HepG2 (cell line): ENCODE measurements at regions of chr21 and their contacts with region 1.

Region 1: GRCh38 chr21:45309069-45309986 is 21.6 kb upstream of the POFUT2 start:
- DNase-seq: peak; percentile 69
- ATAC-seq: peak; percentile 76
- H3K4me3 ChIP-seq: peak overlapping the region; percentile 60 to 78 (median 61)
- H3K27ac ChIP-seq: peak overlapping the region; percentile 91
- H3K4me1 ChIP-seq: peaks cover 39% of the 10 kb centered on the region
- H3K27me3 ChIP-seq: no peaks in the 10 kb centered on the region
- CTCF ChIP-seq: peak; percentile 75
- EP300 ChIP-seq: no peak
- POLR2A ChIP-seq: no peak
- RAD21 ChIP-seq: peak; percentile 76

Region 2: GRCh38 chr21:45297869-45298268 is 11.5 kb before region 1 on chr21:
- CTCF ChIA-PET with region 1: interaction called, 20 read pairs
- POLR2A ChIA-PET with region 1: interaction called, 21 read pairs
- in situ Hi-C with region 1: no loop called
- intact Hi-C with region 1: loop called (anchors 1 kb)
- DNase-seq: no peak
- ATAC-seq: no peak
- H3K4me3 ChIP-seq: no peak overlapping the region
- H3K27ac ChIP-seq: no peak overlapping the region
- H3K4me1 ChIP-seq: peaks cover 61% of the 10 kb centered on the region
- H3K27me3 ChIP-seq: no peaks in the 10 kb centered on the region; a peak in 1 of 5 replicates
- CTCF ChIP-seq: no peak
- EP300 ChIP-seq: 0 out of 4 replicates have a peak, but pooled peaks of 1 of the 2 experiments have one; percentile 13
- POLR2A ChIP-seq: no peak
- RAD21 ChIP-seq: no peak

Region 3: GRCh38 chr21:45330075-45330781 is 20.9 kb after region 1 on chr21:
- CTCF ChIA-PET with region 1: no interaction called
- POLR2A ChIA-PET with region 1: interaction called, 26 read pairs
- in situ Hi-C with region 1: no loop called
- intact Hi-C with region 1: no loop called
- DNase-seq: peak; percentile 89
- ATAC-seq: peak; percentile 85
- H3K4me3 ChIP-seq: peak overlapping the region; percentile 25 to 72 (median 56); a peak in 5 of 6 replicates
- H3K27ac ChIP-seq: peak overlapping the region; percentile 72
- H3K4me1 ChIP-seq: peaks cover 79% of the 10 kb centered on the region
- H3K27me3 ChIP-seq: no peaks in the 10 kb centered on the region
- CTCF ChIP-seq: no peak
- EP300 ChIP-seq: peak in 1 of 2 experiments; percentile 70; a peak in 2 of 4 replicates
- POLR2A ChIP-seq: no peak; a peak in 1 of 4 replicates
- RAD21 ChIP-seq: peak; percentile 29; the same call in 1 of the 2 replicates

Region 4: DNA sequence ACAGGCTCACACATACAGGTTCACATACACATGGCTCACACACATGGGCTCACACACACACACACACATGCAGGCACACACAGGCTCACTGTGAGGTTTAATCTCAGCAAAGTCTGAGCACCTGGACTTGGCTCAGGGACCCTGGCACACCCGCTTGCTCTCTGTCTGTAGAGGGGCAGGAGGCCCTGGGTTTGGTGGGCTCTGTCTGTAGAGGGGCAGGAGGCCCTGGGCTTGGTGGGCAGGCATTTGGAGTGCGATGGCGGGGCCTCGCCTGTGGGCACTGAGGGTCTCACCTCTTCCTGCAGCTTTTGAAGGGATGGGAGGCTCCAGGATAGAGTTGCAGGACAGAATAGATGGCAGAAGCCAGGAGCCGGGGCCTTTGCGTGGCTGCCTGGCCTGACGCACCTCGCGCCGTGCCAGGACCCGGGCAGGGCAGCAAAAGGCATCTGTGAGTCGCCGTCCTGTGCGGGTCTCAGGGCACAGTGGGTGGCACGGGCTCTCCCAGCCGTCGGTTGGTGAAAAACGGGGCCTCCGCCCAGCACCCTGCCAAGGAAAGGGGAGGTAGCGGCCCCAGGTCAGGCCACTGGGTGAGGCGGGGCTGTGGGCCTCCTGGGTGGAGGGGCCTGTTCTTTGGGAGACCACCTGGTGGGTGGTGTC is 112.9 kb after region 1 on chr21:
- CTCF ChIA-PET with region 1: no interaction called
- POLR2A ChIA-PET with region 1: interaction called, 11 read pairs
- in situ Hi-C with region 1: no loop called
- intact Hi-C with region 1: loop called (anchors 1 kb)
- DNase-seq: no peak
- ATAC-seq: no peak
- H3K4me3 ChIP-seq: no peak overlapping the region
- H3K27ac ChIP-seq: no peak overlapping the region
- H3K4me1 ChIP-seq: peaks cover 77% of the 10 kb centered on the region
- H3K27me3 ChIP-seq: no peaks in the 10 kb centered on the region
- CTCF ChIP-seq: no peak
- EP300 ChIP-seq: no peak
- POLR2A ChIP-seq: no peak
- RAD21 ChIP-seq: no peak

Region 5: DNA sequence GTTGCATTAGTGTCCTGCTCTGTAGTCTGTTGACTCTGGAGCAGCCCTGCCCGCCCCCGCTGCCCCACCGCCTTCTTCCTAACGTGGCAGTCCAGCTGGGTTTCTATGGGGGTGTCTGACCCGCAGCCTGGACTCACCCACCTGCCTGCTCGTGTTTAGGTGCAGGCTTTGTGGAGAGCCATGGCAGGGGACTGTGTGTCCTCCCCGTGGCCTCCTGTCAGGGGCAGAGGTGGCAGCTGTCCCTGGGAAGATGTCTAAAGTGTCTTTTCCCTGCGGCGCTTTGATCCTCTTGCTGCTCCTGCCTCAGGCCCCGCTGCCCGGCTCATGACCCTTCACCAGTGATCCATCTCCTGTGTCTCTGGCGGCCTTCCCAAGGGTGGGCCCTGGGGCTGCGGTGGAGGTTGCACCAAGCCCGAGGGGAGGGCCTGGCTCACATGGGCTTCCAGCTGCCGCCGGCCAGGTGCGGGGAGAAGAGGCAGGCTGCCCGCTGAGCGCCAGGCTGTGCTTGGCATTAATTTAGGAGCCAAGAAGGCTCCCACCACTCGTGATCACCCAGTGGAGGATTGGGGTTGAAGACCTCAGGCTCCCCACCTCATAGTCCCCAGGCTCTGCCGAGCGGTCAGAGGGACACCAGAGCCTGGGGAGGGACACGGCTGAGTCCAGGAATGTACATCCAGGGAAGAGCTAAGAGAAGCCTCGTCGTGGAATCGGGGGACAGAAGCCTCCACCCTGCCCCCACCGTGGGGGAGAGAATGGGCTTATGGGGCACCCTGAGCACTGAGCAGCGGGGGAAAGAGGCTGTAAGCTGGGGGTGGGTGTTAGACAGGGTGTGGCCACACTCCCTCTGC is 139.7 kb after region 1 on chr21:
- CTCF ChIA-PET with region 1: no interaction called
- POLR2A ChIA-PET with region 1: interaction called, 4 read pairs
- in situ Hi-C with region 1: no loop called
- intact Hi-C with region 1: loop called (anchors 5 kb)
- DNase-seq: peak; percentile 94
- ATAC-seq: peak; percentile 84
- H3K4me3 ChIP-seq: peak overlapping the region in 2 of 3 experiments; percentile 21 to 49; a peak in 3 of 6 replicates
- H3K27ac ChIP-seq: peak overlapping the region; percentile 74
- H3K4me1 ChIP-seq: peaks cover 83% of the 10 kb centered on the region
- H3K27me3 ChIP-seq: no peaks in the 10 kb centered on the region
- CTCF ChIP-seq: no peak; the same call in 1 of the 2 replicates
- EP300 ChIP-seq: 0 out of 4 replicates have a peak, but pooled peaks of 1 of the 2 experiments have one; percentile 39
- POLR2A ChIP-seq: no peak
- RAD21 ChIP-seq: peak; percentile 22; the same call in 1 of the 2 replicates

Region 6: GRCh38 chr21:45578176-45578801 is 269.0 kb after region 1 on chr21:
- CTCF ChIA-PET with region 1: no interaction called
- POLR2A ChIA-PET with region 1: no interaction called
- in situ Hi-C with region 1: no loop called
- intact Hi-C with region 1: no loop called
- DNase-seq: peak; percentile 30
- ATAC-seq: peak; percentile 33
- H3K4me3 ChIP-seq: no peak overlapping the region
- H3K27ac ChIP-seq: no peak overlapping the region
- H3K4me1 ChIP-seq: no peaks in the 10 kb centered on the region
- H3K27me3 ChIP-seq: peaks cover 13 to 45% of the 10 kb centered on the region in 2 experiments; a peak in 4 of 5 replicates
- CTCF ChIP-seq: no peak
- EP300 ChIP-seq: no peak
- POLR2A ChIP-seq: no peak
- RAD21 ChIP-seq: no peak